Activated CD8-positive, alpha-beta T cell treated with anti-CD3 and anti-CD28 coated beads for 36 hours (primary cell): ENCODE measurements at regions of chr5 and their contacts with region 1.

Region 1: GRCh38 chr5:134380346-134380745 is 9.0 kb downstream of the UBE2B start:
- DNase-seq: no peak
- ATAC-seq: no peak
- H3K4me3 Mint-ChIP-seq: no peak overlapping the region
- H3K27ac Mint-ChIP-seq: peak overlapping the region; percentile 70
- H3K4me1 Mint-ChIP-seq: peaks cover 47% of the 10 kb centered on the region
- H3K27me3 Mint-ChIP-seq: no peaks in the 10 kb centered on the region
- CTCF ChIP-seq: no peak

Region 2: DNA sequence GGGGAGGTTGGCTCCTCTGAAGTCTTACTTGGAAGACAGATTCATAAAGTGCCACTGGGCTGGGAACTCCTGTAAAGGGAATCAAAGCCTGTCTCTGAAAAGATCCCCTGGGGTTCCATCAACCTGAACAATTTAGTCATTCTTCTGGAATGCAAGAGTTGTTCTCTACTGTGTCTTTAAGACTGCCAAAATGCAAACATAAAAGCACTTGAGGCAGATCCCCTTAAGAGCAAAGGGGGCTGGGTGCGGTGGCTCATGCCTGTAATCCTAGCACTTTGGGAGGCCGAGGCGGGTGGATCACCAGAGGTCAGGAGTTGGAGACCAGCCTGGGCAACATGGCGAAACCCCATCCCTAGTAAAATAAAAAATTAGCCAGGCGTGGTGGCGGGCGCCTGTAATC is 14.6 kb after region 1 on chr5:
- CTCF ChIA-PET with region 1: interaction called, 10 read pairs
- POLR2A ChIA-PET with region 1: interaction called, 5 read pairs
- intact Hi-C with region 1: no loop called
- DNase-seq: no peak
- ATAC-seq: no peak
- H3K4me3 Mint-ChIP-seq: no peak overlapping the region
- H3K27ac Mint-ChIP-seq: no peak overlapping the region
- H3K4me1 Mint-ChIP-seq: peaks cover 11% of the 10 kb centered on the region
- H3K27me3 Mint-ChIP-seq: no peaks in the 10 kb centered on the region
- CTCF ChIP-seq: no peak

Region 3: GRCh38 chr5:134648425-134649162 is 268.2 kb after region 1 on chr5 and contains the start of gene SEC24A:
- CTCF ChIA-PET with region 1: no interaction called
- POLR2A ChIA-PET with region 1: no interaction called
- intact Hi-C with region 1: no loop called
- DNase-seq: peak; percentile 96
- ATAC-seq: peak; percentile 86
- H3K4me3 Mint-ChIP-seq: peak within 1 kb of the TSS; percentile 87
- H3K27ac Mint-ChIP-seq: peak within 1 kb of the TSS; percentile 98
- H3K4me1 Mint-ChIP-seq: peaks cover 19% of the 10 kb centered on the region
- H3K27me3 Mint-ChIP-seq: no peaks in the 10 kb centered on the region
- CTCF ChIP-seq: no peak
- total RNA-seq, gene SEC24A: 29.3 to 30.5 TPM